CD4-positive, alpha-beta memory T cell (primary cell): ENCODE measurements at regions of chr3 and their contacts with region 1.

Region 1: GRCh38 chr3:123723522-123724168 is 138.8 kb upstream of the HACD2 start:
- DNase-seq: peak in 4 of 5 donors; percentile 39 to 50 (median 44)
- H3K4me3 ChIP-seq: no peak overlapping the region
- H3K4me3 Mint-ChIP-seq: no peak overlapping the region
- H3K27ac ChIP-seq: no peak overlapping the region
- H3K27ac Mint-ChIP-seq: no peak overlapping the region
- H3K4me1 ChIP-seq: peaks cover 5% of the 10 kb centered on the region
- H3K4me1 Mint-ChIP-seq: peaks cover 0 to 1% (median 0%) of the 10 kb centered on the region in 4 donors
- H3K27me3 ChIP-seq: no peaks in the 10 kb centered on the region
- H3K27me3 Mint-ChIP-seq: peaks cover 8 to 12% of the 10 kb centered on the region in 2 donors

Region 2: DNA sequence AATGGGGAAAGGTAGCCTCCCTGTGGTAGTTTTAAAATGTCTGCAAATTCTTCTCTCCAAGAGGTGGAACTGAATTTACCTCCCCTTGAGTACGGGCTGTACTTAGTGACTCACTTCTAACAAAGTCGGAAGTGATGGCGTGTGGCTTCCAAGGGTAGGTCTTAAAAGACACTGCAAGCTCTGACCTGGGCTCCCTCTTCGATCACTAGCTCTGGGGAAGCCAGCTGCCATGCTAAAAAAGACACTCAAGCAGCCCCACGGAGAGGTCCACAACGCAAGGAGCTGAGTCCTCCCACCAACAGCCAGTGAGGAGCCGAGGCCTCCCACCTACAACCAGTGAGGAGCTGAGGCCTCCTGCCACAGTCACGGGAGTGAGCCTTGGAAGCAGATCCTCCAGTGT is 16.8 kb before region 1 on chr3:
- CTCF ChIA-PET with region 1: interaction called, 11 read pairs
- POLR2A ChIA-PET with region 1: no interaction called
- intact Hi-C with region 1: no loop called
- DNase-seq: no peak
- H3K4me3 ChIP-seq: no peak overlapping the region
- H3K4me3 Mint-ChIP-seq: no peak overlapping the region
- H3K27ac ChIP-seq: no peak overlapping the region
- H3K27ac Mint-ChIP-seq: no peak overlapping the region
- H3K4me1 ChIP-seq: no peaks in the 10 kb centered on the region
- H3K4me1 Mint-ChIP-seq: no peaks in the 10 kb centered on the region
- H3K27me3 ChIP-seq: no peaks in the 10 kb centered on the region
- H3K27me3 Mint-ChIP-seq: peaks cover 0 to 4% of the 10 kb centered on the region in 2 donors

Region 3: DNA sequence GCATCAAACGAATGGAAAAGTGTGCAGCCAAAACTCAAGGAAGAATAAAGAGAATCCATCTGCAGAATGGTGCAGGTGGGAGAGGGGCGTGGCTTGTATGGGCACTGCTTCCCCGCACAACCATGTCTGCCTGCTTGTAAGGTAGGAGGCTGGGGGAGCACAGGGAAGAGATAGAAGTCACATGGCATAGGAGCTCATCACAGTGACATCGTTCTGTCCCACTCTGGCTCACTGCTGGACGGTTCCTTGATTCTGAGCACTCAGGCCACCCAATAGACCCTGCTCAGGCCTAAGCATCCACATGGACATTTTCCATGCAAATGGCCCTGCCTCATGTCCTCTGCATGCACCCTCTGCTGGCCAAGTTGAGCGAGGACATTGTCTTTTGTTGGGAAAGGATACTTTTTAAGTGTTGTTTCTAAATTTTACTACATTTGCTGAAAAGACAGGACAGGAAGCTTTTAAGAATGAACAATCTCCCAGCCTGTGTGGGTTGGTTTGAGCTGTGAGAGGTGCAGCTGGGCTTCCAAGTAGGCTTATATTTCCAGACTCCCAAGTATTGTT is 157.4 kb after region 1 on chr3:
- CTCF ChIA-PET with region 1: no interaction called
- POLR2A ChIA-PET with region 1: no interaction called
- intact Hi-C with region 1: no loop called
- DNase-seq: no peak
- H3K4me3 ChIP-seq: no peak overlapping the region
- H3K4me3 Mint-ChIP-seq: no peak overlapping the region
- H3K27ac ChIP-seq: no peak overlapping the region
- H3K27ac Mint-ChIP-seq: no peak overlapping the region
- H3K4me1 ChIP-seq: peaks cover 8% of the 10 kb centered on the region
- H3K4me1 Mint-ChIP-seq: peaks cover 6 to 18% (median 10%) of the 10 kb centered on the region in 4 donors
- H3K27me3 ChIP-seq: peaks cover 6% of the 10 kb centered on the region
- H3K27me3 Mint-ChIP-seq: peaks cover 37 to 39% of the 10 kb centered on the region in 2 donors